GM12878 (cell line): ENCODE measurements at regions of chr18 and their contacts with region 1.

Region 1: GRCh38 chr18:45106331-45106774 is 425.7 kb downstream of the SETBP1 start:
- DNase-seq: peak; percentile 87
- ATAC-seq: peak; percentile 83
- H3K4me3 ChIP-seq: no peak overlapping the region
- H3K27ac ChIP-seq: peak overlapping the region; percentile 92
- H3K4me1 ChIP-seq: peaks cover 47% of the 10 kb centered on the region
- H3K27me3 ChIP-seq: no peaks in the 10 kb centered on the region
- CTCF ChIP-seq: no peak
- EP300 ChIP-seq: peak; percentile 97 to 99
- POLR2A ChIP-seq: no peak
- RAD21 ChIP-seq: no peak

Region 2: GRCh38 chr18:44909191-44909719 is 197.1 kb before region 1 on chr18:
- CTCF ChIA-PET with region 1: interaction called, 3 read pairs
- POLR2A ChIA-PET with region 1: no interaction called
- RAD21 ChIA-PET with region 1: interaction called, 6 read pairs
- SMC1A ChIA-PET with region 1: interaction called, 4 read pairs
- in situ Hi-C with region 1: no loop called
- intact Hi-C with region 1: loop called (anchors 5 kb)
- DNase-seq: peak; percentile 68
- ATAC-seq: peak; percentile 85
- H3K4me3 ChIP-seq: peak overlapping the region; percentile 29; the same call in 1 of the 2 replicates
- H3K27ac ChIP-seq: 0 out of 2 replicates have a peak overlapping the region, but pooled peaks have one; percentile 13
- H3K4me1 ChIP-seq: peaks cover 45% of the 10 kb centered on the region
- H3K27me3 ChIP-seq: no peaks in the 10 kb centered on the region
- CTCF ChIP-seq: no peak
- EP300 ChIP-seq: peak in 1 of 2 experiments; percentile 53; a peak in 2 of 4 replicates
- POLR2A ChIP-seq: no peak
- RAD21 ChIP-seq: 0 out of 2 replicates have a peak, but pooled peaks have one; percentile 11

Region 3: GRCh38 chr18:45136381-45137086 is 30.2 kb after region 1 on chr18:
- CTCF ChIA-PET with region 1: interaction called, 5 read pairs
- POLR2A ChIA-PET with region 1: no interaction called
- RAD21 ChIA-PET with region 1: interaction called, 12 read pairs
- SMC1A ChIA-PET with region 1: interaction called, 6 read pairs
- in situ Hi-C with region 1: no loop called
- intact Hi-C with region 1: no loop called
- DNase-seq: no peak
- ATAC-seq: peak; percentile 71
- H3K4me3 ChIP-seq: no peak overlapping the region
- H3K27ac ChIP-seq: no peak overlapping the region
- H3K4me1 ChIP-seq: peaks cover 6% of the 10 kb centered on the region; the same call in 1 of the 2 replicates
- H3K27me3 ChIP-seq: no peaks in the 10 kb centered on the region
- CTCF ChIP-seq: no peak
- EP300 ChIP-seq: no peak
- POLR2A ChIP-seq: no peak
- RAD21 ChIP-seq: no peak

Region 4: GRCh38 chr18:45166836-45167551 is 60.6 kb after region 1 on chr18:
- CTCF ChIA-PET with region 1: interaction called, 3 read pairs
- POLR2A ChIA-PET with region 1: no interaction called
- RAD21 ChIA-PET with region 1: no interaction called
- SMC1A ChIA-PET with region 1: interaction called, 4 read pairs
- in situ Hi-C with region 1: no loop called
- intact Hi-C with region 1: loop called (anchors 2 kb)
- DNase-seq: no peak
- ATAC-seq: peak; percentile 80
- H3K4me3 ChIP-seq: no peak overlapping the region
- H3K27ac ChIP-seq: no peak overlapping the region
- H3K4me1 ChIP-seq: 0 out of 2 replicates have a peak, but pooled peaks cover 4% of the 10 kb centered on the region
- H3K27me3 ChIP-seq: no peaks in the 10 kb centered on the region
- CTCF ChIP-seq: no peak
- EP300 ChIP-seq: no peak
- POLR2A ChIP-seq: no peak
- RAD21 ChIP-seq: no peak

Region 5: DNA sequence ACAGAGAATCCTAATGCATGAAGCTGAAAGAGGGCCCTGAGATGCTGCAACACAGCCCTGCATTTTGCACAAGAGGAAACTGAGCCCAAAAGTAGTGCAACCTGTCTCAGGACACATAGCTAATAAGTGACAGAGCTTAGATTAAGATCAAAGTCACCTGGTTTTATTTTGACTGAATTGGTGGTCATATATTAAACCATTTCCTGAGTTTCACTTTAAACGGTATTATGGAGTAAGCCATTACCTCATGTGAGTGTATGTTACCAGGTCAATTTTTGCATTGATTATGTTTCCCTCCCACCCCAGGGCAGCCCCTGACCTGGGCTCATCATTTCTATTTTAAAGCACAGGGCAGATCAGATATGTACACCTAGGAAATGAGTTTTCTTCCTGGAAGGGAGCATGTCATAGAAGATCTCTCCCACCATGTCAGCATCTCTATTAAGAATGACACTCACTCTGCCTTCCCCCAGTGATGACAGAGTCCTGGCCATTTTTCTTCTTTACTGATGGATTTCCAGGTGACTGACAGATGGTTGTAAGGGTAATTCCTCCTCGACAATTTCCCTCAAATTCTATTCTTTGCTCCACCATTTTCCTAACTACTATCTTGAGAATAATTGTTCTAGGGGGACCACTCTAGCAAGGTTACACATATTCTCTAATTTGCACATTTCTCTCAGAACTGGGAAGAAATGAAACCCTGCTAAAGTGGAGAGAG is 67.6 kb after region 1 on chr18:
- CTCF ChIA-PET with region 1: no interaction called
- POLR2A ChIA-PET with region 1: no interaction called
- RAD21 ChIA-PET with region 1: interaction called, 10 read pairs
- SMC1A ChIA-PET with region 1: interaction called, 3 read pairs
- in situ Hi-C with region 1: no loop called
- intact Hi-C with region 1: no loop called
- DNase-seq: no peak
- ATAC-seq: peak; percentile 82
- H3K4me3 ChIP-seq: no peak overlapping the region
- H3K27ac ChIP-seq: no peak overlapping the region
- H3K4me1 ChIP-seq: no peaks in the 10 kb centered on the region
- H3K27me3 ChIP-seq: no peaks in the 10 kb centered on the region
- CTCF ChIP-seq: no peak
- EP300 ChIP-seq: no peak
- POLR2A ChIP-seq: no peak
- RAD21 ChIP-seq: no peak

Region 6: GRCh38 chr18:45197526-45197970 is 91.2 kb after region 1 on chr18:
- CTCF ChIA-PET with region 1: interaction called, 13 read pairs
- POLR2A ChIA-PET with region 1: interaction called, 8 read pairs
- RAD21 ChIA-PET with region 1: interaction called, 37 read pairs
- SMC1A ChIA-PET with region 1: interaction called, 46 read pairs
- in situ Hi-C with region 1: no loop called
- intact Hi-C with region 1: loop called (anchors 1 kb)
- DNase-seq: peak; percentile 88
- ATAC-seq: peak; percentile 98
- H3K4me3 ChIP-seq: no peak overlapping the region
- H3K27ac ChIP-seq: peak overlapping the region; percentile 42; the same call in 1 of the 2 replicates
- H3K4me1 ChIP-seq: peaks cover 7% of the 10 kb centered on the region; the same call in 1 of the 2 replicates
- H3K27me3 ChIP-seq: no peaks in the 10 kb centered on the region
- CTCF ChIP-seq: no peak
- EP300 ChIP-seq: peak; percentile 99 to 100
- POLR2A ChIP-seq: no peak
- RAD21 ChIP-seq: no peak